ENCODE measurements at regions of chr20 and their contacts with region 1.

Region 1: DNA sequence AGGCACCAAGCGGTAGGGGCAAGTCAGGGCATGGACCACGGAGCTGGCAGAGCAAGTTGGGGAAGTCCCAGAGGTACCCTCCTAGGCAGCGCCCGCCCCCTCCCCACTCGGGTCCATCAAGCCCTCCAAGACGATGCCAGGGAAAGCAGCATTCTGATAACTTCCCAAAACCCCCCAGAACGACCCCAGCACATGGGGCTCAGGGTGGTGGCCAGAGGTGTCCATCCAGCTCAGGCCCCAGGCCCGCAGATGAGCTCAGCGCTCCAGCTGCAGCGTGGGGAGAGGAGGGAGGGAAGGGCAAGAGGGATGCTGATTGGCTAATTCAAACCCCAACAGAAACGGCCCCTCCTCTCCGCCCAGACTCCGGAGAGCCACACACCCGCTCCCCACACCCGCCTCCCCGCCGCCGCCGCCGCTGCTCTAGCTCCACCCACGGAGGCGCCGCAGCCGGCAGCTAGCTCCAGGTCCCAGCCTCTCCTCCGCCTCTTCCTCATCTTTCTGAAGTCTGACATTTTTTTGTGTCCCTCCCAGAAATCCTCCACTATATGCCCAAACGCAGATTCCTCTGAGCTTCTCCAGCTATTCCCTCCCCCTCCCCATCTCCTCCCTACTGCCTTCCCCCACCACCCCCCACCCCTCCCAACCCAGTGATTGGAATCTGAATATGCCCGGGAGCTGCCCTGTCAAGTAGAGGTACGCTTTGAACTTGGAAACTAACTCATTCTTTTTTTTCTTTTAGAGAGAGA is 40.3 kb upstream of the TLDC2 start:
- DNase-seq: peak; percentile 91
- ATAC-seq: peak; percentile 92
- H3K4me3 Mint-ChIP-seq: peak overlapping the region; percentile 67
- H3K27ac Mint-ChIP-seq: peak overlapping the region; percentile 89
- H3K4me1 Mint-ChIP-seq: peaks cover 26% of the 10 kb centered on the region
- H3K27me3 Mint-ChIP-seq: no peaks in the 10 kb centered on the region
- CTCF ChIP-seq: no peak

Region 2: GRCh38 chr20:36754656-36755222 is 80.9 kb before region 1 on chr20:
- CTCF ChIA-PET with region 1: no interaction called
- POLR2A ChIA-PET with region 1: no interaction called
- DNase-seq: peak; percentile 54
- ATAC-seq: peak; percentile 95
- H3K4me3 Mint-ChIP-seq: no peak overlapping the region
- H3K27ac Mint-ChIP-seq: no peak overlapping the region
- H3K4me1 Mint-ChIP-seq: no peaks in the 10 kb centered on the region
- H3K27me3 Mint-ChIP-seq: no peaks in the 10 kb centered on the region
- CTCF ChIP-seq: peak; percentile 61; the same call in 1 of the 2 replicates

Region 3: DNA sequence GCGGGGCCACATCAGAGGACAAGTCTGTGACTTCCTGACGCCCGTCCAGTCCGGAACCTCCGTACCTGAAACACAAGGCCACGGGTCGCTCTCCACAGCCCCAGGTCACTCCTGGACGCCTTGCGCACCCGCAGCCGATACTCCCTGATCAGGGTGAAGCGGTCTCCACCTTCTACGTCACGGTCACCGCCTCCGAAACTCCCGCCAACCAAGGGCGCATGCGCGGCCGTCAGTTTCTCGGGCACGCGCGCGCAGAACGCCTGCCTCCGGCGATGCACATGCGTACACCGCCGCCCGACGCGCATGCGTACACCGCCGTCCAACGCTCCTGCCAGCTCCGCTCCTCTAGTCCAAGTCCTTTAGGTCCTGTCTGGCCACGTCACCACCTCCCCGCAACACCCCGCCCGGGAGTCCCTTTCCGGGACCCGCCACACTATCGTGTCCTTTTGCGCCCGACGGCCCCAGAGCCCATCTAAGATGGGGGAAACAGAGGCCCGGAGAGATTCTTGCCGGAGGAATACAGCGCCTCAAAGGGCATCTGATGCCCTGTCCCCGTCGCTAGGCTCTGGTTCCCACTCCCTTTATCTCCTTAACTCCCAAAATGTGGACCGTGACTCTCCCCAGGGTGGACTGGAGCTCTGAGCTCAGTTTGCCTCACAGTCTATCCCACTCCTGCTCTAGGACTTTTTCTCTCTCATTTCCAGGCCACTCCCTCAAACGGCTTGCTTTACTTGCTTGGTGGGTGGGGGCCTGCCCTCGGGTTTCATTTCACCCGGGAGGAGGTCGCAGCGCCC is 61.8 kb before region 1 on chr20 and contains the start of gene DSN1:
- CTCF ChIA-PET with region 1: interaction called, 27 read pairs
- POLR2A ChIA-PET with region 1: interaction called, 4 read pairs
- DNase-seq: peak; percentile 99
- ATAC-seq: peak; percentile 80
- H3K4me3 Mint-ChIP-seq: peak within 1 kb of the TSS; percentile 90
- H3K27ac Mint-ChIP-seq: peak within 1 kb of the TSS; percentile 100
- H3K4me1 Mint-ChIP-seq: peaks cover 7% of the 10 kb centered on the region
- H3K27me3 Mint-ChIP-seq: peaks cover 2% of the 10 kb centered on the region; the same call in 1 of the 2 replicates
- CTCF ChIP-seq: no peak
- total RNA-seq, gene DSN1: 26.0 to 27.0 TPM (median 26.9 TPM) in 3 replicates

Region 4: DNA sequence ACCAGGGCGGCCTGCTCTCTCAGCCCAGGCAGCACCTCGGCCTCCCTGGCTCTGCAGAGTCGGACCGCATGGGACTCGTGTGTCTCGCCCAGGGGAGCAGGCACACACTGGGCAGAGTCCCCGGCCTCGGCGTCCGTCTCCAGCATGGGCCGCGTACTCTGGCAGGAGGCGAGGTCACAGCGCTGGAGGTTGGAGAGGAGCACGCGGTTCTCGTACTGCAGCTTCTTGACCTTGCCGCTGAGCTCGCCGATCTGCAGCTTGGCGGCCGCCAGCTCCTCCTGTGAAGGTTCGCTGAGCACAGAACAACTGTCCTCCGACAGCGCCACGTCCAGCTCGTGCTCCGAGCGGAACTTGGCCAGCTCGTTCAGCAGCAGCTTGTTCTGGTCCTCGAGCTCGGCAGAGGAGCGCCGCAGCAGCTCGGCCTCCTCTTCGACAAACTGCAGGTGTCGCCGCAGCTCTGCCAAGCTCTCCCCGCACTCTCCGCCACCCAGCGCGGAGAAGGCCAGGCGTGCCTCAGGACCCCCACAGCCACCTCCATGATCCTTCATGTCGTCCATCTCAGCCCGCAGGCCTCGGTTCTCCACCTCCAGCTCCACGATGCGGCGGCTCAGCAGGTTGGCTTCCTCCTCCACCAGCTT is 20.1 kb before region 1 on chr20:
- CTCF ChIA-PET with region 1: interaction called, 22 read pairs
- POLR2A ChIA-PET with region 1: no interaction called
- DNase-seq: peak; percentile 43
- ATAC-seq: peak; percentile 57
- H3K4me3 Mint-ChIP-seq: no peak overlapping the region
- H3K27ac Mint-ChIP-seq: peak overlapping the region; percentile 11; the same call in 1 of the 2 replicates
- H3K4me1 Mint-ChIP-seq: peaks cover 22% of the 10 kb centered on the region
- H3K27me3 Mint-ChIP-seq: no peaks in the 10 kb centered on the region
- CTCF ChIP-seq: no peak

Region 5: GRCh38 chr20:36847009-36847709 is 11.5 kb after region 1 on chr20:
- CTCF ChIA-PET with region 1: interaction called, 17 read pairs
- POLR2A ChIA-PET with region 1: interaction called, 5 read pairs
- DNase-seq: no peak
- ATAC-seq: no peak
- H3K4me3 Mint-ChIP-seq: no peak overlapping the region
- H3K27ac Mint-ChIP-seq: peak overlapping the region; percentile 24; the same call in 1 of the 2 replicates
- H3K4me1 Mint-ChIP-seq: peaks cover 15% of the 10 kb centered on the region
- H3K27me3 Mint-ChIP-seq: no peaks in the 10 kb centered on the region
- CTCF ChIP-seq: no peak

Region 6: DNA sequence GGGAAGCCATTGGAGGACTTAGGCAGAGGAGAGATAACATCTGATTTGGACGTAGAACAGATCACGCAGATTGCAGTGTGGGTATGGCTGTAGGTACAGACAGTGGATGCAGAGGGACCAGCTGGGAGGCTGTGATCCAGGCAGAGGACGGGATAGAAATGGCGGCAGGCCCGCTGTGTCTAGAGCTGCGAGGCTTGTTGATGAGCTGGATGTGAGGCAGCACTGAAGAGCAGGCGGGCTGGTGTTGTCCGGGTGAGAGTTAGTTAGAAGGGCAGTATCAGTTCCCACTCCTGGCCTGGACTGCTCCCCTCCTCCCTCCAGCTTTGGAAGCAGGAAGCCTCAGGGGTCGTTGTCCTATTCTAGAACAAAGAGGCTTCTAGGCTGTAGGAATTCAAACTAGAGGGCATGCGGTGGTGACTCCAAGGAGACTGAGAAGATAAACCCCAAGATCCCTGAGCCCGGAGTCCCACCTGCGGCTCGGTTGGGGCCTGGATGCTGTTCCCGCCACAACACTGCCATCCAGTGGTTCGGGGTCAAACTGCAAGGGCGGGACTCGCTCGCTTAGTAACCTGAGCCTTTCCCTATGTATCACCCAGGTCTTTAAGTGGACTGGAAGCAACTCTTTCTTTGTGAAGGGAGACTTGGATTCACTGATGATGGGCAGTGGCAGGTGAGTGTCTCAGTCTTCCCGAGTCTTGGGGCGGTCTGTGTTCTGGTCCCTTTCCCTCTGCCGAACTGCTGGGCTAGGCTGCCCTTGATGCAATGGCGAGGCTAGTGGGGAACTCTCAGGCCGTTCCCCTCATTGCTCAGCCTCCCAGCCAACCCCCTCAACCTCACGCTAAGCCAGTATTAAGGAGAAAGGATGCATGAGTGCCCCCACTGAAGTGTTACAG is 51.5 kb after region 1 on chr20:
- CTCF ChIA-PET with region 1: interaction called, 28 read pairs
- POLR2A ChIA-PET with region 1: interaction called, 4 read pairs
- DNase-seq: peak; percentile 96
- ATAC-seq: peak; percentile 90
- H3K4me3 Mint-ChIP-seq: peak overlapping the region; percentile 36
- H3K27ac Mint-ChIP-seq: peak overlapping the region; percentile 61
- H3K4me1 Mint-ChIP-seq: peaks cover 20% of the 10 kb centered on the region
- H3K27me3 Mint-ChIP-seq: no peaks in the 10 kb centered on the region; the same call in 1 of the 2 replicates
- CTCF ChIP-seq: peak; percentile 96